ENCODE measurements at regions of chr19 and their contacts with region 1.

Region 1: DNA sequence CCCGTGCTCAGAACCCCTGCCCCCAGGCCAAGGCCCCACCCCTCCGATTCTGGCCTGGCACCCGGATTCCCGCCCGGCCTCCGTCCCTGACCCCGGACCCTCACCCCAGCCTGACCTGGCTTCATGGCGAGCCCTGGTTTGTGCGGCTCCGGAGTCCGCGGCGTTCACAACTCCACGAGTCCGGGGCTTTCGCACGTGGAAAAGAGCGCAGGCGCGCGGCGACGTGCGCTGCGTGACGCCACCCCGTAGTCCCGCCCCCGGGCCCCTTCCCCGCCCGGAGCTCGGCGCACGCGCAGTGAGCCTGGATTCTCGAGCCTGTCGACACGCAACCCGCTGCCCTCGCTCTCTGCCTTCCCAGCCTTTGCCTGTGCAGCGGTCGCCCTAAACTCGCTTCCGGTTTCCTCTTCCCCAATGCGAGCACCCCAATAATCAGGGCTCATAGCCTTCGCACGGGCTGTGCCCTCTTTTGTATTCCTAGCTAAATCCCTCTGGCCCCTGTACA is at the start of gene FBL:
- DNase-seq: peak; percentile 96 to 100
- ATAC-seq: peak; percentile 79 to 91
- H3K4me3 ChIP-seq: peak within 1 kb of the TSS; percentile 86
- H3K27ac ChIP-seq: peak within 1 kb of the TSS; percentile 87 to 90
- H3K4me1 ChIP-seq: peaks cover 44% of the 10 kb centered on the region
- CTCF ChIP-seq: no peak; the same call in 2 of the 3 replicates
- EP300 ChIP-seq: no peak
- POLR2A ChIP-seq: peak; percentile 99
- RAD21 ChIP-seq: no peak
- polyA plus RNA-seq, gene FBL: 716 and 970 TPM in 2 replicates

Region 2: GRCh38 chr19:39546599-39546998 is 299.6 kb before region 1 on chr19:
- CTCF ChIA-PET with region 1: interaction called, 17 read pairs
- POLR2A ChIA-PET with region 1: no interaction called
- DNase-seq: peak in 1 of 2 experiments; percentile 45
- ATAC-seq: peak in 1 of 2 experiments; percentile 17; a peak in 2 of 6 replicates
- H3K4me3 ChIP-seq: no peak overlapping the region
- H3K27ac ChIP-seq: no peak overlapping the region
- H3K4me1 ChIP-seq: no peaks in the 10 kb centered on the region
- CTCF ChIP-seq: no peak
- EP300 ChIP-seq: no peak
- POLR2A ChIP-seq: no peak
- RAD21 ChIP-seq: no peak

Region 3: DNA sequence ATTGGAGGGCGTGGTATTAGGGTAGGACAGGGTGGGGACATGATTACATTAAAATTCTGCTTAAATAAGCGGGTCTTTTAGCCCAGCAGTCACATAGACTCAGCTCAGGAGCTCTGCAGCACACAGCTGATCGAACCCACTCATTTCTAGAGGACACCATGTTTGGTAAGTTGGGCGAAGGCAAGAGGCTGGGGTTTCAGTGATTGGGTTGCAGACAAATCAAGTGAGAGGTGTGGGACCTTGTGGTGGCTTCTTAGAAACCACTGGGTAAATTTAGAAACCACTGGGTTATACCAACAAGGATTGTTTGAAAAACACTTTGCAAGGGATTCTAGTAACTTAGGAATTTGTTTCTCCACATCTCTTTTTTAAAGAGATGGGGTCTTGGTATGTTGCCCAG is 67.5 kb before region 1 on chr19 and contains the start of gene LEUTX:
- CTCF ChIA-PET with region 1: interaction called, 19 read pairs
- POLR2A ChIA-PET with region 1: no interaction called
- DNase-seq: no peak
- ATAC-seq: no peak
- H3K4me3 ChIP-seq: no peak within 1 kb of the TSS
- H3K27ac ChIP-seq: no peak within 1 kb of the TSS
- H3K4me1 ChIP-seq: no peaks in the 10 kb centered on the region
- CTCF ChIP-seq: no peak
- EP300 ChIP-seq: no peak
- POLR2A ChIP-seq: no peak
- RAD21 ChIP-seq: no peak
- polyA plus RNA-seq, gene LEUTX: not detected in 2 replicates

Region 4: DNA sequence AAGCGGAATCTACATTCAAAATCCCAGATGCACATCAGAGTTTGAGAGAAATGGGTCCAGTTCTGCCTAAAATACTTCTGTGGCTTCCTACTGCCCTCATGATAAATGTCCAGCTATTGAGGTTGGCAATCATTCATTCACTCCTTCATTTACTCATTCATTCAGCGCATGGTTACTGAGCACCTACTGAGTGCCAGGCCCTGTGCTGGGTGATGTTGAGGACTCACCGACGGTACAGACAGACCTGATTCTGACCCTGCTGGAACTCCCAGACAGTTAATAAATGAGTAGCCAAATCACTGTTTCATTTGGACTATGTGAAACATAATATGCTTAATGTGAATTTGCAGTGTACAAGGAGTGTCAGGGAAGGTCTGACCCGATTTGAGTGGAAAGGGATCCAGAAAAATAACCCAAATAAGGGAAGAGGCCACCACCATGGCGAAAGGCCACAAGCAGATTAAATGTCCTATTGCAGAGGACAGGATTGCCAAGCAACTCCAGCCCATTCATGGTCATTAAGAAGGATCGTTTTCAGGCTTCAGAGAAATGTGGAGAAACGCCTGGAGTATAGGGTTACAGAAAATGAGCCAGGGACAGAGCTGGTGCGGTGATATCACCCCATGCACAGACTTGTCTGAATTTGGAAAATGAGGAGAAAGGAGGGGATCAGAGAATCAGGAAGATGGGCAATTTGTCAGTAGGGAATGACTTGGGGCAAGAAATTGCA is 32.8 kb before region 1 on chr19:
- CTCF ChIA-PET with region 1: interaction called, 64 read pairs
- POLR2A ChIA-PET with region 1: interaction called, 9 read pairs
- DNase-seq: no peak
- ATAC-seq: no peak
- H3K4me3 ChIP-seq: no peak overlapping the region
- H3K27ac ChIP-seq: no peak overlapping the region
- H3K4me1 ChIP-seq: no peaks in the 10 kb centered on the region
- CTCF ChIP-seq: no peak
- EP300 ChIP-seq: no peak
- POLR2A ChIP-seq: no peak
- RAD21 ChIP-seq: no peak

Region 5: GRCh38 chr19:39858541-39858940 is 12.3 kb after region 1 on chr19:
- CTCF ChIA-PET with region 1: interaction called, 44 read pairs
- POLR2A ChIA-PET with region 1: interaction called, 11 read pairs
- DNase-seq: peak in 1 of 2 experiments; percentile 65
- ATAC-seq: peak; percentile 40 to 78; a peak in 3 of 6 replicates
- H3K4me3 ChIP-seq: no peak overlapping the region
- H3K27ac ChIP-seq: no peak overlapping the region
- H3K4me1 ChIP-seq: no peaks in the 10 kb centered on the region
- CTCF ChIP-seq: no peak
- EP300 ChIP-seq: no peak
- POLR2A ChIP-seq: no peak
- RAD21 ChIP-seq: no peak